OCI-LY7 (cell line): ENCODE measurements at regions of chr18 and their contacts with region 1.

Region 1: GRCh38 chr18:59402432-59403090 is 43.5 kb upstream of the LMAN1 start:
- DNase-seq: peak; percentile 68
- H3K4me3 ChIP-seq: no peak overlapping the region
- H3K27ac ChIP-seq: no peak overlapping the region
- H3K4me1 ChIP-seq: no peaks in the 10 kb centered on the region
- CTCF ChIP-seq: peak; percentile 77

Region 2: GRCh38 chr18:59085797-59086196 is 316.8 kb before region 1 on chr18:
- CTCF ChIA-PET with region 1: no interaction called
- POLR2A ChIA-PET with region 1: no interaction called
- intact Hi-C with region 1: loop called (anchors 2 kb)
- DNase-seq: no peak
- H3K4me3 ChIP-seq: no peak overlapping the region
- H3K27ac ChIP-seq: peak overlapping the region; percentile 59
- H3K4me1 ChIP-seq: peaks cover 32% of the 10 kb centered on the region
- CTCF ChIP-seq: no peak

Region 3: DNA sequence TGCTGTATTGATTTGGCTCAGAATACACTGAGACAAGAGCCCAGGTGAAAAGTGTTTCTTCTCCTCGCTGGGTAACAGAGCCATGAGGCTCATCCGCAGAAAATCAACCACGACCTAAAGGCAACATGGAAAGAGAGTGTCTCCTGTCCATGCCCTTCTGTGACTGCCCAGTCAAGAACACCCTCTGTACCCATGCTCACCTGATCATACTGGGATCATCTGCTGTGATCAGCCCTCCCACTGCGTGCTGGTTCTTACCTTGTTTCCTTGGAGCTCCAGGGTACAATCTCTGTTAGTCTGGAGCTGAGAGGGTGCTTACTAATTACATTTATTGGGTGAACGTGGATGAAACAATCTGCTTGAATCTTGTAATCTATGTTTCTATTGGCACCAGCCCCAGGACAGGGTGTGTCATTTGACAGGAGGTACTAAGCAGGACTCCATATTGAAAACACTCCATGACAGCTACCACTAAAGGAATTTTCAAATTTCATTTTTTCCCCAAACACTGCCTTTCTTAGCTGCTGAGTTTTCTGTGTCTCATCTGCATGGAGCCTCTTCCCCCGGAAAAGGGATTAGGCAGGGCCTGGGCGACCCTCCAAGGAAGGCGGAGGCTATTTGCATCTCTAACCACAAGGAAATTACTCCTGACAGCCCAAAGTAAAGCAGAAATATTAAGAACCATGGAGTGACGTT is 222.3 kb before region 1 on chr18:
- CTCF ChIA-PET with region 1: no interaction called
- POLR2A ChIA-PET with region 1: no interaction called
- intact Hi-C with region 1: no loop called
- DNase-seq: no peak
- H3K4me3 ChIP-seq: no peak overlapping the region
- H3K27ac ChIP-seq: no peak overlapping the region
- H3K4me1 ChIP-seq: no peaks in the 10 kb centered on the region
- CTCF ChIP-seq: no peak

Region 4: GRCh38 chr18:59249205-59249774 is 153.3 kb before region 1 on chr18:
- CTCF ChIA-PET with region 1: interaction called, 5 read pairs
- POLR2A ChIA-PET with region 1: no interaction called
- intact Hi-C with region 1: loop called (anchors 2 kb)
- DNase-seq: peak; percentile 23
- H3K4me3 ChIP-seq: no peak overlapping the region
- H3K27ac ChIP-seq: no peak overlapping the region
- H3K4me1 ChIP-seq: no peaks in the 10 kb centered on the region
- CTCF ChIP-seq: peak; percentile 71

Region 5: GRCh38 chr18:59308248-59308937 is 94.2 kb before region 1 on chr18:
- CTCF ChIA-PET with region 1: interaction called, 3 read pairs
- POLR2A ChIA-PET with region 1: interaction called, 7 read pairs
- intact Hi-C with region 1: loop called (anchors 2 kb)
- DNase-seq: peak; percentile 1
- H3K4me3 ChIP-seq: no peak overlapping the region
- H3K27ac ChIP-seq: no peak overlapping the region
- H3K4me1 ChIP-seq: no peaks in the 10 kb centered on the region
- CTCF ChIP-seq: peak; percentile 64